Activated B cell treated with CpG ODN at 0.5 μM for 24 hours (primary cell): ENCODE measurements at regions of chr4 and their contacts with region 1.

Region 1: DNA sequence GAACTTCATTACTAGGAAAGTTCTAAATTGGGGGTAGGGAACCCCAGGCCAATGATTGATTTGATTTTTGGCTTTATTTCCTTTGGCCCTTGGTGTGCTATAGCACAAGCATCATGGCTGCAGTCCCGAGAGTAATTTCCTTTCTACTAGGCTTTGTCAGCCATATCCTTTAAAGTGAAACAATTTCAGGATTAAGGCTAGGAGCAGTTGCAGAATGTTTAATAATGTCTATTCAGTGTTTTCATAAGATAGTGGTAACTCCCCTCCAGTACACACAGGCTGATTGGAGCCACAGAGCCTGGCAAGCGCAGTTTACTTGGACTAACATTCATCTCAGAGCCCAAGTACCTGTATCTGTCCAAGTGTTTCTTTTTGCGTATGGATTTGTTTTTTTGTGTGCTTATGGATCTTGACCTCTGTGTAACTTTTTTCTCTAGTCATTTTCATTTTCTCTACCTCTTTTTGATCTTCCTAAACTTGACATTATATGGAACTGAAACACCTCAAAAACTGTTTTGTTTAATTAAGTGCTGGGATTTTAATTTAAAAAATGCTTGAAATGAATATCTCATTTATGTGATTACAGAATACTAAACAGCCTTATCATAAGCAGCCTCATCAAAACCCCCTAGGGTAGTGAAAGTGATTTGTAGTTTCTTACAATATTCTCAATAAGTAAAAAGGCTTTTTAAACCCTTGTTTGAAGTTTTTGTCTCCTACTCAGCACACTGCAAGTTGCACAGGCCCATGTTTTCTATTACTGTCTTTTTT is 7.5 kb downstream of the STIM2 start:
- DNase-seq: no peak
- ATAC-seq: no peak
- H3K4me3 Mint-ChIP-seq: peak overlapping the region; percentile 48
- H3K27ac Mint-ChIP-seq: peak overlapping the region; percentile 60
- H3K4me1 Mint-ChIP-seq: peaks cover 85% of the 10 kb centered on the region
- H3K27me3 Mint-ChIP-seq: no peaks in the 10 kb centered on the region
- CTCF ChIP-seq: no peak

Region 2: GRCh38 chr4:26473893-26474292 is 394.2 kb before region 1 on chr4:
- CTCF ChIA-PET with region 1: no interaction called
- POLR2A ChIA-PET with region 1: no interaction called
- intact Hi-C with region 1: no loop called
- DNase-seq: no peak
- ATAC-seq: no peak
- H3K4me3 Mint-ChIP-seq: no peak overlapping the region
- H3K27ac Mint-ChIP-seq: no peak overlapping the region
- H3K4me1 Mint-ChIP-seq: no peaks in the 10 kb centered on the region
- H3K27me3 Mint-ChIP-seq: no peaks in the 10 kb centered on the region
- CTCF ChIP-seq: no peak

Region 3: GRCh38 chr4:26878794-26879391 is 10.8 kb after region 1 on chr4:
- CTCF ChIA-PET with region 1: interaction called, 4 read pairs
- POLR2A ChIA-PET with region 1: interaction called, 29 read pairs
- intact Hi-C with region 1: loop called (anchors 1 kb)
- DNase-seq: no peak
- ATAC-seq: no peak
- H3K4me3 Mint-ChIP-seq: no peak overlapping the region
- H3K27ac Mint-ChIP-seq: peak overlapping the region; percentile 72
- H3K4me1 Mint-ChIP-seq: peaks cover 86% of the 10 kb centered on the region
- H3K27me3 Mint-ChIP-seq: no peaks in the 10 kb centered on the region
- CTCF ChIP-seq: no peak

Region 4: DNA sequence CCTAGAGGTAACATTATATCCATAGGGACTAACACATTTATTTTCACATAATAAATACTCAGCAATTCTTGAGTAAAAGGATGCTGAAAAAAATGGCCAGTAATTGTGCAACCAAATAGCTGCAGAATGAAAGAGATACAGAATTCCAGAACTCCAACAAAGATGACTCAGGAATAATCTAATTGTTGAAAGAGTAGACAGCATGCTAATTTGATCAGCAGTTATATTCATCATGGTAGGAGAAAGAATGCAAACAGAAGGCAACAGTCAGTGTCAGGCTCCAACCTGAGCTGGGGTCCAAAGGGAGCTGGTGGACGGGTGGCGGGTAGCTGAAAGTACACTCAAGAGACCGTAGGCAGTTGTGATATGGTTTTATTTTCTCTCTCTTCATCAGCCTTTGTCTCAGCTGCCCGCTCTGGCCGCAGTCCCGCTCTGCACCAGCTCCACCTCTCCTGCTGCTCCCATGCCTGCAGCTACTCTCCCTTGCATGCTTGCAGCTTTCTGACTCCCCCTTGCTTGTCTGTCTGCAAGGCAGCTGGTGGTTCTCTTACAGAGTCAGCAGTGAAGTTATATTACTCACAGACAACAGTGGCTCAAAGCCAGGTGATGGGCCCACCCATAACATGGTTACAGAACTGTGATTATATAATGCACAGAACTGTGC is 1142.6 kb after region 1 on chr4:
- CTCF ChIA-PET with region 1: no interaction called
- POLR2A ChIA-PET with region 1: no interaction called
- intact Hi-C with region 1: no loop called
- DNase-seq: no peak
- ATAC-seq: no peak
- H3K4me3 Mint-ChIP-seq: no peak overlapping the region
- H3K27ac Mint-ChIP-seq: no peak overlapping the region
- H3K4me1 Mint-ChIP-seq: no peaks in the 10 kb centered on the region
- H3K27me3 Mint-ChIP-seq: no peaks in the 10 kb centered on the region
- CTCF ChIP-seq: no peak

Region 5: DNA sequence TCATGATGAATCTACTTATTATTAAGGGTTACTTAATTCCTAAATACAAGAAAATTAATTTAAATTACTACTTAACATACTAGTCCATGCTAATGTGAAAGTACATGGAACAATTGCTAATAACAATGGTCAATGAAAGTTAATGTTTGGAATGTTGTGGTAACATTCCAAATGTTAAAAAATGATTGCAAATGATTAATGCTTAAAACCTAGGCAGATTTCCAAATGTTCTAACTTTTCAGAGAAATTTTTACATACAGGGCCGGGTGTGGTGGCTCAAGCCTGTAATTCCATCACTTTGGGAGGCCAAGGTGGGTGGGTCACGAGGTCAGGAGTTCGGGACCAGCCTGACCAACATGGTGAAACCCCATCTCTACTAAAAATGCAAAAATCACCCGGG is 2000.7 kb after region 1 on chr4:
- CTCF ChIA-PET with region 1: no interaction called
- POLR2A ChIA-PET with region 1: no interaction called
- intact Hi-C with region 1: no loop called
- DNase-seq: no peak
- ATAC-seq: no peak
- H3K4me3 Mint-ChIP-seq: no peak overlapping the region
- H3K27ac Mint-ChIP-seq: no peak overlapping the region
- H3K4me1 Mint-ChIP-seq: no peaks in the 10 kb centered on the region
- H3K27me3 Mint-ChIP-seq: no peaks in the 10 kb centered on the region
- CTCF ChIP-seq: no peak